Heart left ventricle (tissue), 16 donors: ENCODE measurements at regions of chr1 and their contacts with region 1.

Region 1: DNA sequence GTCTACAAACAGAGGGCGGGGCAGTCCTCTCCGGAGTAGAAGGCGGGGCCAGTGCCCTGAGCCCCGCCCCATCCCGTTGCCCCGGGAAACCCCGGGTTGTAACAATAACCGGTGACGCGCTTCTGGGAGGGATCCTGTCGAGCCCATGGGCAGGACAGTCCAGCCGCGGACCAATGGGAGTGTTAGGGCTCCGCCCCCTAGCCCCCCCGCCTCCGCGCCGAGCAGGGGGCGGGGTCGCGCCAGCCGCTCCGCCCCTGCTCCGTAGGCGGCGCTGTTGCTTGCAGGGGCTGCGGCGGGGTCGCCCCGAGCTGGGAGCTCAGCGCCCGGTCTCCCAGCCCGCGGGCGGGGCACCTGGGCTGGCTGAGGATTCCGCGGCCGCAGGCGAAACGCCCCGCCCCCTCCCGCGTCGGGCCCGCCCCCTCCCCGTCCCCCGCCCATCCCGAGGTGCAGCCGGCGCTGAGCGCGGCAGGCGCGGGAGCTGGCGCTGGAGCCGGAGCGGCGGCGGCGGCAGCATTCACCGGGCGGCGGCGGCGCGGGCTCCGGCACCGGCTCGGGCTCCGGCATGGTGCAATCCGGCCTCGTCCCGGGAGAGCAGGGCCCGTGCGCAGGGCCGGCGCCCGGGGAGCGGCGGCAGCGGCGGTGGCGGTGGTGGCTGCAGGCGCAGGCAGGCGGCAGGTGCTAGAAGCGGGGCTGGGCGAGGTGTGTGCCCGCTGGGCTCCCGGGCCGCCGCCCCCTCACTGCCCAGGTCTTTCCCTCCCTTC is at the start of gene FOXO6:
- DNase-seq: peak; percentile 98 to 100 (median 99)
- ATAC-seq: peak; percentile 93 to 95 (median 94)
- H3K4me3 ChIP-seq: peak within 1 kb of the TSS; percentile 50 to 80 (median 69)
- H3K27ac ChIP-seq: peak within 1 kb of the TSS in 9 of 12 donors; percentile 33 to 66 (median 42)
- H3K4me1 ChIP-seq: peaks cover 0 to 68% (median 42%) of the 10 kb centered on the region in 12 donors
- H3K27me3 ChIP-seq: peaks cover 0 to 43% (median 0%) of the 10 kb centered on the region in 9 donors
- CTCF ChIP-seq: peak; percentile 25 to 75 (median 61)
- POLR2A ChIP-seq: peak in 1 of 2 donors; percentile 10
- total RNA-seq, gene FOXO6: 0.69 to 4.8 (median 1.4) TPM

Region 2: GRCh38 chr1:41003640-41004220 is 357.4 kb before region 1 on chr1:
- intact Hi-C with region 1: no loop called
- DNase-seq: peak; percentile 90 to 96 (median 91)
- ATAC-seq: peak; percentile 94 to 98 (median 96)
- H3K4me3 ChIP-seq: no peak overlapping the region
- H3K27ac ChIP-seq: peak overlapping the region in 2 of 12 donors; percentile 15 to 61
- H3K4me1 ChIP-seq: peaks cover 0 to 20% (median 12%) of the 10 kb centered on the region in 12 donors
- H3K27me3 ChIP-seq: no peaks in the 10 kb centered on the region
- CTCF ChIP-seq: peak; percentile 5 to 70 (median 48)
- POLR2A ChIP-seq: no peak

Region 3: DNA sequence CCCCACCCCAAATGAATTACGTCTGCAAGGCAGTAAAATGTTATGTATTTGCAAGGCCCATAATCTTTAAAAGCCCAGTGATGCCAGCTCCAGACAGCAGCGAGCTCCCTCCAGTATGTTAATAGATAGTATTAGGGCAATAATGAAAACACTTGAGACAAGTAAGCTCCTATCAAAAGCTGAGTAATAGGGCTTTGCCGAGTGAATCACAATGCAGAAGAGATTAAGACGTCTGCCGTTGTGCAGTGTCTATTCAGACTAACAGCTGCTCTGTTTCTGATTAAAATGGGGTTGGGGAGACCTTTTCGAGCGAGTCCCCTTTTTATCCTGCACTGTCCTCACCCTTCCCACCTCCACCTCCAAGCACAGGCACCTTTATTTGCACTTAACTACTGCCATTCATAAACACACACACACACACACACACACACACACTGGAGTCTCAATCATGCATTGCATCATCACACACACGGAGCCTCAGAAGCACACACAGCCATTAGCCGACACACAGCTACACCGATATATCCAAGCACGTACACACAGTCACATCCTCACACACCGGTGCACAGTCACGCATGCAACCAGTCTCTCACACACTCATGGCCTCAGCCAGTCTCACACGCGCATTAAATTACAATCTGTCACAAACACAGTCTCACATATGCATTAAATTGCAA is 45.9 kb before region 1 on chr1:
- intact Hi-C with region 1: loop called in 1 of 10 experiments (anchors 5 kb)
- DNase-seq: no peak
- ATAC-seq: no peak
- H3K4me3 ChIP-seq: no peak overlapping the region
- H3K27ac ChIP-seq: no peak overlapping the region
- H3K4me1 ChIP-seq: peaks cover 0 to 21% (median 13%) of the 10 kb centered on the region in 12 donors
- H3K27me3 ChIP-seq: no peaks in the 10 kb centered on the region
- CTCF ChIP-seq: no peak
- POLR2A ChIP-seq: no peak

Region 4: DNA sequence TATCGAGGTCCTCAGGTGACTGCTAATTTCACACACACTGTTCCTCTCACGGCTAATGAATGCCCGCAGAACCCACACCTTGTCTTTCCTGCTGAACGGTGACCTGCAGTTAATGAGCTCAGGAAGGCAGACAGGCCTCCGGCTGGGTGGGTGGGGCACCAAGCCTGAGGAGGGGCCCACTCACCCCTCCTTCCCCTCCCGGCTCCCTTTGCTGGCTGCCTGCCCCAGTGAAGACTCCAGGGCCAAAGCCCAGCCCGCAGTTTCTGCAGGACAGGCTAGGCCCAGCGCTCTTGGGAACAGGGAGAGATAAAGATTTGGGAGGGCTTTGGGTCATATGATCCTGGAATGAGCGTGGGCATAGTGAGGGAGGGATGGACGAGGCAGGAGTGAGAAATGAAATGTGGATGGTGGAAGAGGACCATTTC is 26.5 kb after region 1 on chr1:
- intact Hi-C with region 1: loop called in 1 of 10 experiments (anchors 1 kb)
- DNase-seq: peak; percentile 87 to 92 (median 90)
- ATAC-seq: peak; percentile 92 to 97 (median 94)
- H3K4me3 ChIP-seq: no peak overlapping the region
- H3K27ac ChIP-seq: peak overlapping the region in 7 of 12 donors; percentile 23 to 54 (median 39)
- H3K4me1 ChIP-seq: peaks cover 0 to 46% (median 18%) of the 10 kb centered on the region in 12 donors
- H3K27me3 ChIP-seq: peaks cover 0 to 15% (median 0%) of the 10 kb centered on the region in 9 donors
- CTCF ChIP-seq: no peak
- POLR2A ChIP-seq: no peak

Region 5: DNA sequence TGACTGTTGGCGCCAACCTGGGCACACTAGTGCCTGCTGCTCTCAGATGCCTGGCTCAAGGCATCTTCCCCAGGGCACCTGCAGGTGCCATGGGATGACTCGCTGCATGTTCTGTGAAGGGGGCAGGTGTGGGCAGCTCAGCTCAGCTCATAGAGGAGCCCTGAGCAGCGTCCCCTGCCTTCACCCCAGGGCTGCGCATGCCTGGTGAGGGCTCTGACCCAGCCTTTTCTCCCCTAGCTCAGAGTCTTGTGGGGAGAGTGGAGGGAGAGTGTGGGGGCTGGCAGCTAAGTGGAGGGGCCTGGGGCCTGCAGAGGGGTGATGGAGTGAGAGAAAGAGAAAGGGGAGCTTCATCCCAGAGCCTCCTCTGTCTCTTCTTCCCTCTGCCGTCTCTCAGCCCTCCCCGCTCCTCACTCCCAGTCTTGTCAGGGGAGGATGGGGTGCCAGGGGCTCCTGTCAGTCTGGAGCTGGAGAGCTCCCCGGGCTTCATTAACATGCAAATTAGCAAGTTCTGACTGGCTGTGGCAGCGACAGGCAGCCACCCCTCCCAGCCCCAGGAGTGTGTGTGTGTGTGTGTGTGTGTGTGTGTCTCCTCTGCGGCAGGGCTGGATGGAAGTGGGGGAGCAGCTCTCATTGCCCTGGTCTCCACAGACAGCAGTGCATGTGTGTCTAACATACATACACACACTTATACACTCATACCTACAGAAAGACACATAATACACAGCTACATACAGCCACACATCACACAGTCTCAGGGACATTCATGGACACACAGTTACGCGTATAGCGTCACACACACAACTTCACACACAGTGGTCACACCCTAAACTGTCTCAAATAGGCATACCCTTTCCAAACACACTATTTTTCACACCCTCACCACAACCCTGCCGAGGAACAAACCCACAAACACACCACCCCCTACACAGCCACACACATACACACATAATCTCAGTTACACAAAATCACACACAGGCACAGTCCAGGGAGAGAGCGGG is 34.1 kb after region 1 on chr1:
- intact Hi-C with region 1: loop called in 1 of 10 experiments (anchors 5 kb)
- DNase-seq: no peak
- ATAC-seq: peak in 2 of 4 donors; percentile 25 to 32
- H3K4me3 ChIP-seq: no peak overlapping the region
- H3K27ac ChIP-seq: no peak overlapping the region
- H3K4me1 ChIP-seq: peaks cover 0 to 45% (median 5%) of the 10 kb centered on the region in 12 donors
- H3K27me3 ChIP-seq: peaks cover 0 to 4% (median 0%) of the 10 kb centered on the region in 9 donors
- CTCF ChIP-seq: no peak
- POLR2A ChIP-seq: no peak

Region 6: GRCh38 chr1:41416552-41417334 is 55.6 kb after region 1 on chr1:
- intact Hi-C with region 1: loop called in 7 of 10 experiments (anchors 2 to 10 kb)
- DNase-seq: peak; percentile 50 to 82 (median 62)
- ATAC-seq: peak; percentile 35 to 65 (median 58)
- H3K4me3 ChIP-seq: no peak overlapping the region
- H3K27ac ChIP-seq: no peak overlapping the region
- H3K4me1 ChIP-seq: peaks cover 0 to 27% (median 15%) of the 10 kb centered on the region in 12 donors
- H3K27me3 ChIP-seq: no peaks in the 10 kb centered on the region
- CTCF ChIP-seq: peak; percentile 84 to 95 (median 92)
- POLR2A ChIP-seq: no peak